Activated B cell treated with CpG ODN at 0.5 μM for 24 hours (primary cell): ENCODE measurements at regions of chr1 and their contacts with region 1.

Region 1: GRCh38 chr1:160451119-160451858 is 50.9 kb downstream of the VANGL2 start:
- DNase-seq: no peak
- ATAC-seq: no peak
- H3K4me3 Mint-ChIP-seq: peak overlapping the region; percentile 26
- H3K27ac Mint-ChIP-seq: peak overlapping the region; percentile 74
- H3K4me1 Mint-ChIP-seq: peaks cover 76% of the 10 kb centered on the region
- H3K27me3 Mint-ChIP-seq: no peaks in the 10 kb centered on the region
- CTCF ChIP-seq: no peak

Region 2: DNA sequence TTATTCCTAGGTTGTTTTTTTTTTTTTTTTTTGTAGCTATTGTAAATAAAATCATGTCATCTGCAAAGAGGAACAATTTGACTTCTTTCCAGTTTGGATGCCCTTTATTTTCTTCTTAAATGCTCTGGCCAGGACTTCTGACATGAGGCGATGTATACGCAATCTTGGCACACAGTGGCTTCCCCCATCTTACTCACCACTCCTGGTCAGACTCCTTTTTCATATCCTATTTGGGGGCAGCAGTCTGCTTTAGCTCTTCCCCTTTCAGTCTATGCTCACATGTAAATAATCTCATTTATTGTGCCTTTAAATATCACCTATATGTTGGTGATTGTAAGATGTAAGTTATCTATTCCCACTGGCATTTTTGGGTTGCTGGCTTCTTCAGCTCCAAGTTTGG is 15.7 kb after region 1 on chr1:
- CTCF ChIA-PET with region 1: interaction called, 4 read pairs
- POLR2A ChIA-PET with region 1: interaction called, 19 read pairs
- intact Hi-C with region 1: loop called (anchors 1 kb)
- DNase-seq: no peak
- ATAC-seq: no peak
- H3K4me3 Mint-ChIP-seq: no peak overlapping the region
- H3K27ac Mint-ChIP-seq: peak overlapping the region; percentile 67
- H3K4me1 Mint-ChIP-seq: peaks cover 49% of the 10 kb centered on the region
- H3K27me3 Mint-ChIP-seq: no peaks in the 10 kb centered on the region
- CTCF ChIP-seq: no peak

Region 3: GRCh38 chr1:160474392-160475242 is 23.3 kb after region 1 on chr1:
- CTCF ChIA-PET with region 1: interaction called, 4 read pairs
- POLR2A ChIA-PET with region 1: interaction called, 19 read pairs
- intact Hi-C with region 1: loop called (anchors 1 kb)
- DNase-seq: no peak
- ATAC-seq: peak; percentile 95
- H3K4me3 Mint-ChIP-seq: no peak overlapping the region
- H3K27ac Mint-ChIP-seq: no peak overlapping the region
- H3K4me1 Mint-ChIP-seq: peaks cover 16% of the 10 kb centered on the region
- H3K27me3 Mint-ChIP-seq: no peaks in the 10 kb centered on the region
- CTCF ChIP-seq: no peak